Panc1 (cell line): ENCODE measurements at regions of chr7 and their contacts with region 1.

Region 1: DNA sequence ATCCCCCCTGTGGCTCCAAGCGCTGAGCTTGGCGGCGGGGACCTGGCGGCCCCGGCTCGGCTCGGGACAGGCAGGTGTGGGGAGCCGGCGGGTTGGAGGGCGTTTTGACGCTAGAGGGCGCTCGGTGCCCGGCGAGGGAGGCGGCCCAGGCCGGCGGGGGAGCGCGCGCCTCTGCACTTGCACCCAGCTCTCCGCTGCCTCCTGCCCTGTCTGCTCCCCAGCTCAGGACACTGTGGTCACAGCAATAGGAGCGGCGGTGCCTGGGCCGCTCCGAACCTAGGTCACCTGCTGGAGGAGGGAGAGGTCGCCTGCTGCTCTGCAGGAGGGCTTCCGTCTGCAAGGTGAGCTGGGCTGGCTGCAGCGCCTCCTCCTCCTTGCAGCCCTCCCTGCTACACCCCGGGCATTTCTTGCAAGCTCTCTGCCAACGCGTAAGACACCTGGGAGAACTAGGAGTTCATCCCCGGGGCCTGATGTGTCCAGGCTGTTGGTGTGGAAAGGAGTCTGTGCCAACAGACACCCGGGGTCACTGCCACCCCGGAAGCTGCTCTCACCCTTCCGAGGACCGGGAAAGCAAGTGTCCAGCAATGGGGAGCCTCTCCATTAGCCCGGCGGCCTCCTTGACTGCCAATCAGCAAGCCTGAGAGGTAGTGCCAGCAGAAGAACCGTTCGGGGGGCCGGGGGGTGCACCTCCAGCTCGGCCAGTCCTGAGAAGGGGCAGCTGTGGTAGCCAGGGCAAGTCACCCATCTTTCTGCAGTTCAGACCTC is 620.4 kb downstream of the GALNT17 start:
- DNase-seq: no peak
- ATAC-seq: peak; percentile 98
- H3K4me3 ChIP-seq: no peak overlapping the region
- H3K27ac ChIP-seq: no peak overlapping the region
- H3K4me1 ChIP-seq: no peaks in the 10 kb centered on the region
- H3K27me3 ChIP-seq: no peaks in the 10 kb centered on the region
- CTCF ChIP-seq: peak; percentile 91

Region 2: GRCh38 chr7:71817916-71818315 is 65.6 kb after region 1 on chr7:
- CTCF ChIA-PET with region 1: no interaction called
- POLR2A ChIA-PET with region 1: no interaction called
- in situ Hi-C with region 1: no loop called
- intact Hi-C with region 1: loop called (anchors 10 kb)
- DNase-seq: no peak
- ATAC-seq: no peak
- H3K4me3 ChIP-seq: no peak overlapping the region
- H3K27ac ChIP-seq: no peak overlapping the region
- H3K4me1 ChIP-seq: no peaks in the 10 kb centered on the region
- H3K27me3 ChIP-seq: no peaks in the 10 kb centered on the region
- CTCF ChIP-seq: no peak

Region 3: GRCh38 chr7:72493850-72494661 is 741.7 kb after region 1 on chr7:
- CTCF ChIA-PET with region 1: no interaction called
- POLR2A ChIA-PET with region 1: no interaction called
- in situ Hi-C with region 1: no loop called
- intact Hi-C with region 1: loop called (anchors 5 kb)
- DNase-seq: peak; percentile 28
- ATAC-seq: peak; percentile 78; the same call in 1 of the 2 replicates
- H3K4me3 ChIP-seq: no peak overlapping the region
- H3K27ac ChIP-seq: no peak overlapping the region
- H3K4me1 ChIP-seq: no peaks in the 10 kb centered on the region
- H3K27me3 ChIP-seq: no peaks in the 10 kb centered on the region
- CTCF ChIP-seq: peak; percentile 85

Region 4: GRCh38 chr7:73487486-73487885 is 1735.1 kb after region 1 on chr7:
- CTCF ChIA-PET with region 1: no interaction called
- POLR2A ChIA-PET with region 1: no interaction called
- in situ Hi-C with region 1: no loop called
- intact Hi-C with region 1: no loop called
- DNase-seq: no peak
- ATAC-seq: no peak
- H3K4me3 ChIP-seq: no peak overlapping the region
- H3K27ac ChIP-seq: no peak overlapping the region
- H3K4me1 ChIP-seq: no peaks in the 10 kb centered on the region
- H3K27me3 ChIP-seq: no peaks in the 10 kb centered on the region
- CTCF ChIP-seq: no peak